ENCODE measurements at regions of chr1 and their contacts with region 1.

Region 1: DNA sequence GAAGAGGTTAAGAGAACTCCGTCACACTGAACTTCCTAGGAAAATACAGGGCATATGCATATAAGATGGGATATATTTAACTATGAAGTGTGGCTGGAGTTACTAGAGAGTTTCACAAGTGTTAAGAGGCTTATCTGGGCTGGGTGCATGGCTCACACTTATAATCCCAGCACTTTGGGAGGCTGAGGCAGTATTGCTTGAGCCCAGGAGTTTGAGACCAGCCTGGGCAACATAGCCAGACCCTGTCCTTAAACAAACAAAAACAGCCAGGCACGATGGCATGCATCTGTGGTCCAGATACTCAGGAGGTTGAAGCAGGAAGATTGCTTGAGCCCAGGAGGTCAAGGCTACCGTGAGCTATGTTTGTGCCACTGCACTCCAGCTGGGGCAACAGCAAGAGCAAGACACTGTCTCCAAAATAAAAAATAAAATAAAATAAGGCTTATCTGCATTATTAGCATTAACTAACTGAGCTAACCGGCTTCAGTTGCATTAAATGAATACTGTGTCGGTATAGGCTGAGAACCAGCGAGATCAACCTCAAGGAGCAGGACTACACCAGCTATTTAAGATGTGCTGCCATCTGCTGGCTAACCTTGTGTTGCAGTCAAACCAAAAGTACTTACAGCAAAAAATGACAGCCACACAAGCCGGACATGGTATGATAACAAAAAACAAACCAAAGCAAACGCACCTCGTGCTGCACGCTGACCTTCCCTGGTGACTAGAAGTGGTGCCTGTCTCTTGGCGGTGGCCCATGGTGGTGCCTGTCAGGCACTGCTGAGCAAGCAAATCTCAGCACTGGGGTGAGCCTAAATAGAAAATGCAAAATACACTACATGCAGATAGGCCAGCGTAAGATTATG is 19.7 kb upstream of the RBBP5 start:
- DNase-seq: peak; percentile 48 to 86 (median 77)
- ATAC-seq: peak; percentile 91
- H3K4me3 ChIP-seq: no peak overlapping the region
- H3K4me3 Mint-ChIP-seq: no peak overlapping the region
- H3K27ac ChIP-seq: no peak overlapping the region
- H3K27ac Mint-ChIP-seq: peak overlapping the region; percentile 3
- H3K4me1 ChIP-seq: peaks cover 4% of the 10 kb centered on the region
- H3K4me1 Mint-ChIP-seq: peaks cover 9% of the 10 kb centered on the region
- H3K27me3 ChIP-seq: no peaks in the 10 kb centered on the region
- H3K27me3 Mint-ChIP-seq: no peaks in the 10 kb centered on the region
- CTCF ChIP-seq: peak; percentile 81

Region 2: GRCh38 chr1:204975570-204976235 is 165.8 kb before region 1 on chr1:
- CTCF ChIA-PET with region 1: interaction called, 3 read pairs
- POLR2A ChIA-PET with region 1: no interaction called
- intact Hi-C with region 1: loop called in 1 of 2 experiments (anchors 1 kb)
- DNase-seq: peak; percentile 16 to 63 (median 49)
- ATAC-seq: peak; percentile 74
- H3K4me3 ChIP-seq: no peak overlapping the region
- H3K4me3 Mint-ChIP-seq: no peak overlapping the region
- H3K27ac ChIP-seq: no peak overlapping the region
- H3K27ac Mint-ChIP-seq: no peak overlapping the region
- H3K4me1 ChIP-seq: no peaks in the 10 kb centered on the region
- H3K4me1 Mint-ChIP-seq: no peaks in the 10 kb centered on the region
- H3K27me3 ChIP-seq: no peaks in the 10 kb centered on the region
- H3K27me3 Mint-ChIP-seq: peaks cover 16% of the 10 kb centered on the region
- CTCF ChIP-seq: peak; percentile 75

Region 3: GRCh38 chr1:204989266-204990058 is 152.0 kb before region 1 on chr1:
- CTCF ChIA-PET with region 1: interaction called, 3 read pairs
- POLR2A ChIA-PET with region 1: no interaction called
- intact Hi-C with region 1: loop called in 1 of 2 experiments (anchors 1 kb)
- DNase-seq: peak; percentile 10 to 67 (median 46)
- ATAC-seq: peak; percentile 87
- H3K4me3 ChIP-seq: no peak overlapping the region
- H3K4me3 Mint-ChIP-seq: no peak overlapping the region
- H3K27ac ChIP-seq: no peak overlapping the region
- H3K27ac Mint-ChIP-seq: no peak overlapping the region
- H3K4me1 ChIP-seq: peaks cover 4% of the 10 kb centered on the region
- H3K4me1 Mint-ChIP-seq: peaks cover 15% of the 10 kb centered on the region
- H3K27me3 ChIP-seq: no peaks in the 10 kb centered on the region
- H3K27me3 Mint-ChIP-seq: no peaks in the 10 kb centered on the region
- CTCF ChIP-seq: peak; percentile 63

Region 4: GRCh38 chr1:205121660-205122488 is 19.6 kb before region 1 on chr1 and contains the start of gene RBBP5:
- CTCF ChIA-PET with region 1: interaction called, 86 read pairs
- POLR2A ChIA-PET with region 1: interaction called, 4 read pairs
- intact Hi-C with region 1: loop called (anchors 1 kb)
- DNase-seq: peak; percentile 92 to 98 (median 95)
- ATAC-seq: peak; percentile 93
- H3K4me3 ChIP-seq: peak within 1 kb of the TSS; percentile 91 to 95
- H3K4me3 Mint-ChIP-seq: peak within 1 kb of the TSS; percentile 96
- H3K27ac ChIP-seq: peak within 1 kb of the TSS; percentile 88 to 97
- H3K27ac Mint-ChIP-seq: peak within 1 kb of the TSS; percentile 100
- H3K4me1 ChIP-seq: peaks cover 26% of the 10 kb centered on the region
- H3K4me1 Mint-ChIP-seq: peaks cover 46% of the 10 kb centered on the region
- H3K27me3 ChIP-seq: no peaks in the 10 kb centered on the region
- H3K27me3 Mint-ChIP-seq: no peaks in the 10 kb centered on the region
- CTCF ChIP-seq: peak; percentile 59
- total RNA-seq, gene RBBP5: 23.9 to 25.7 TPM

Region 5: DNA sequence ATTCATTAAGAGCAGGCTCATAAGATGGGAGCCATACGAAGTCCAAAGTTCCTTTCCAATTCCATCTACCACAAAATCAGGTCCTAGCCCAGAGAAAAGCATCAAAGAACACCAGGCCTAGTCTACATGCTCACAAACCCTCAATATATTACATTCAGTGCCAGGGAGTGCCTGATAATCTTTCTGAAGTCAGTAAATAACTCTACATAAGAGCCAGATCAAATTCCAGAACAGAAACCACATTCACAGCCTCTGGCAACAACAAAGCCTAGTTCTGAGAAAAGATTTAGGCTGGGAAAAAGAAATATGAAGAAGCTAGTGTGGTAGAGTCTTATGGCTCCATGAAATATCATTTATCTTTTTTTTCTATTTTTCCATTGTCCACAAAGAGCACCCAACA is 20.8 kb after region 1 on chr1:
- CTCF ChIA-PET with region 1: interaction called, 11 read pairs
- POLR2A ChIA-PET with region 1: no interaction called
- intact Hi-C with region 1: no loop called
- DNase-seq: no peak
- ATAC-seq: no peak
- H3K4me3 ChIP-seq: no peak overlapping the region
- H3K4me3 Mint-ChIP-seq: no peak overlapping the region
- H3K27ac ChIP-seq: no peak overlapping the region
- H3K27ac Mint-ChIP-seq: no peak overlapping the region
- H3K4me1 ChIP-seq: no peaks in the 10 kb centered on the region
- H3K4me1 Mint-ChIP-seq: peaks cover 2% of the 10 kb centered on the region
- H3K27me3 ChIP-seq: no peaks in the 10 kb centered on the region
- H3K27me3 Mint-ChIP-seq: no peaks in the 10 kb centered on the region
- CTCF ChIP-seq: no peak

Region 6: DNA sequence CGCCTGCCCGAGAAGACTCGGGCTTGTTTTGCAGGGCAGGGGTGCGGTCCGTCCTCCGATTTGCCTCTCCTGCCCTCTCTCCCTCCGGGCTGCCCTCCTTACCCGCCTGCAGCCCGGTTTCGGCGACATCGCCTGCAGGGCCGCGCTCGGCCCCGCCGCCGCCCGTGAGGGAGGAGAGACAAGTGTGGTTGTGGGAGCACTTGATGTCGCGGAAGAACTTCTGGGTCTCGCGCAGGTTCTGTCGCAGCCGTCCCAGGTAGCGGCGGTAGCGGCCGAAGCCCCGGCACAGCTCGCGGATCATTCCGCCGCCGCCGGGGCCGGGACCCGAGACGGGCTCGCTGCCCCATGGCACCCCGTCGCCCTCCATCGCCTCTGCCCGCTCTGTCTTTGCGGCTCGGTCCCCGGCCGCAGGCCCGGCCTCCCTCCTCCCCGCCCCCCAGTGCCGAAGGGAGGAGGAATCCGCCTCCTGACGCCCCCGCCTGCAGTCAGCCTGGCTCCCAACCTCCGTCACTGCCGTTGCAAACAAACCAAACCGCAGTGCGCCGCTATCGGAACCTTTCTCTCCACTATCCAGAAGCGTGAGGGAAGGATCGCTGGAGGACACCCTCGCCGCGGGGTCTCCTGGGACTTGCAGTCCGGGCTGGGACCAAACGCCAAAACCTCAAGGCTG is 69.8 kb after region 1 on chr1 and contains the start of gene DSTYK:
- CTCF ChIA-PET with region 1: no interaction called
- POLR2A ChIA-PET with region 1: no interaction called
- intact Hi-C with region 1: no loop called
- DNase-seq: peak; percentile 83 to 96 (median 91)
- ATAC-seq: peak; percentile 92
- H3K4me3 ChIP-seq: peak within 1 kb of the TSS; percentile 55 to 93
- H3K4me3 Mint-ChIP-seq: peak within 1 kb of the TSS; percentile 96
- H3K27ac ChIP-seq: peak within 1 kb of the TSS; percentile 58 to 80
- H3K27ac Mint-ChIP-seq: peak within 1 kb of the TSS; percentile 98
- H3K4me1 ChIP-seq: peaks cover 15% of the 10 kb centered on the region
- H3K4me1 Mint-ChIP-seq: peaks cover 50% of the 10 kb centered on the region
- H3K27me3 ChIP-seq: no peaks in the 10 kb centered on the region
- H3K27me3 Mint-ChIP-seq: no peaks in the 10 kb centered on the region
- CTCF ChIP-seq: no peak
- total RNA-seq, gene DSTYK: 15.4 to 17.2 TPM